ENCODE measurements at regions of chr14 and their contacts with region 1.

Region 1: DNA sequence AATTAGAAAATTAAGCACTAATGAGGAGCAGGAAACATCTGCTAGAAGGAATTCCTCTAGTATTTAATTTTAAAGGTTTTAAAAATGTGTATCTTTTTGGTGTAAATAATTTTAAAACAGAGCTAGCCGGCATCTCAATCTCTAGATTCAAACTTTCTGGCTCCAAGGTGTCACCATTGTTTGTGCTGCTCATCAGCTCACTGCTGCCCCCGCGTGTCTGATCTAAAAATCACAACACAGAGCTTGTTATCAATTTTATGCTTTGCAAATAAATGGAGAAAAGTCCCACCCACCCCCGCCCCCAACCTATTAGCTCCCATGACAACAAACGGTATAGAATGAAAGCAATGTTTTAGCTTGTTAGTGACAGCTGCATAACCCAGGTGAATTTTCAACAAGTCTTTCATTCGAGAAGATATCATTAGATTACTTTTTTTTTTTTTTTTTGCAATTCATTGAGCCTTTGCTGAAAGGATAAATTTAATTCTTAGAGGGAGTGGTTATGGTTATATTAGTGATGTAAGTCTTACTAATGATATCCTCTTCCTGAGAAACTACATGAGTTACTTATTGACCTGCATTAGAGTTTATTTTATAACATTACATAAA is 11.3 kb upstream of the ABHD12B start:
- DNase-seq: peak; percentile 66
- ATAC-seq: peak; percentile 39
- H3K4me3 ChIP-seq: peak overlapping the region; percentile 49 to 93 (median 77)
- H3K27ac ChIP-seq: no peak overlapping the region
- H3K4me1 ChIP-seq: peaks cover 28% of the 10 kb centered on the region
- H3K27me3 ChIP-seq: 0 out of 5 replicates have a peak, but pooled peaks cover 0 to 3% of the 10 kb centered on the region in 2 experiments
- CTCF ChIP-seq: peak; percentile 68
- EP300 ChIP-seq: no peak
- POLR2A ChIP-seq: no peak
- RAD21 ChIP-seq: peak; percentile 24; the same call in 1 of the 2 replicates

Region 2: GRCh38 chr14:50778721-50779483 is 81.7 kb before region 1 on chr14:
- CTCF ChIA-PET with region 1: no interaction called
- POLR2A ChIA-PET with region 1: no interaction called
- in situ Hi-C with region 1: loop called (anchors 5 kb)
- intact Hi-C with region 1: loop called (anchors 2 kb)
- DNase-seq: no peak
- ATAC-seq: no peak
- H3K4me3 ChIP-seq: no peak overlapping the region
- H3K27ac ChIP-seq: no peak overlapping the region
- H3K4me1 ChIP-seq: no peaks in the 10 kb centered on the region
- H3K27me3 ChIP-seq: no peaks in the 10 kb centered on the region
- CTCF ChIP-seq: no peak
- EP300 ChIP-seq: no peak
- POLR2A ChIP-seq: no peak
- RAD21 ChIP-seq: no peak

Region 3: GRCh38 chr14:50830932-50831725 is 29.5 kb before region 1 on chr14 and contains the start of gene NIN:
- CTCF ChIA-PET with region 1: no interaction called
- POLR2A ChIA-PET with region 1: interaction called, 4 read pairs
- in situ Hi-C with region 1: no loop called
- intact Hi-C with region 1: loop called (anchors 5 kb)
- DNase-seq: peak; percentile 33
- ATAC-seq: peak; percentile 89
- H3K4me3 ChIP-seq: peak within 1 kb of the TSS; percentile 77 to 86 (median 77)
- H3K27ac ChIP-seq: no peak within 1 kb of the TSS
- H3K4me1 ChIP-seq: peaks cover 83% of the 10 kb centered on the region
- H3K27me3 ChIP-seq: peaks cover 0 to 17% of the 10 kb centered on the region in 2 experiments; a peak in 1 of 5 replicates
- CTCF ChIP-seq: no peak
- EP300 ChIP-seq: no peak
- POLR2A ChIP-seq: no peak
- RAD21 ChIP-seq: peak; percentile 38; the same call in 1 of the 2 replicates
- total RNA-seq, gene NIN: 9.7 and 11.6 TPM in 2 replicates

Region 4: GRCh38 chr14:50875359-50876070 is 14.9 kb after region 1 on chr14:
- CTCF ChIA-PET with region 1: no interaction called
- POLR2A ChIA-PET with region 1: interaction called, 5 read pairs
- in situ Hi-C with region 1: no loop called
- intact Hi-C with region 1: loop called (anchors 2 kb)
- DNase-seq: peak; percentile 96
- ATAC-seq: peak; percentile 97
- H3K4me3 ChIP-seq: peak overlapping the region in 2 of 3 experiments; percentile 34 to 59; a peak in 4 of 6 replicates
- H3K27ac ChIP-seq: peak overlapping the region; percentile 69
- H3K4me1 ChIP-seq: peaks cover 74% of the 10 kb centered on the region
- H3K27me3 ChIP-seq: no peaks in the 10 kb centered on the region
- CTCF ChIP-seq: no peak
- EP300 ChIP-seq: peak; percentile 57 to 90; a peak in 3 of 4 replicates
- POLR2A ChIP-seq: no peak
- RAD21 ChIP-seq: no peak

Measured in HepG2 (cell line).